A549 (cell line): ENCODE measurements at regions of chr16 and their contacts with region 1.

Region 1: GRCh38 chr16:75519881-75520280 is 16.0 kb downstream of the CHST5 start:
- DNase-seq: no peak
- ATAC-seq: no peak
- H3K4me3 ChIP-seq: no peak overlapping the region
- H3K27ac ChIP-seq: no peak overlapping the region
- H3K4me1 ChIP-seq: no peaks in the 10 kb centered on the region; the same call in 2 of the 3 replicates
- CTCF ChIP-seq: no peak
- EP300 ChIP-seq: no peak
- POLR2A ChIP-seq: no peak
- RAD21 ChIP-seq: no peak

Region 2: DNA sequence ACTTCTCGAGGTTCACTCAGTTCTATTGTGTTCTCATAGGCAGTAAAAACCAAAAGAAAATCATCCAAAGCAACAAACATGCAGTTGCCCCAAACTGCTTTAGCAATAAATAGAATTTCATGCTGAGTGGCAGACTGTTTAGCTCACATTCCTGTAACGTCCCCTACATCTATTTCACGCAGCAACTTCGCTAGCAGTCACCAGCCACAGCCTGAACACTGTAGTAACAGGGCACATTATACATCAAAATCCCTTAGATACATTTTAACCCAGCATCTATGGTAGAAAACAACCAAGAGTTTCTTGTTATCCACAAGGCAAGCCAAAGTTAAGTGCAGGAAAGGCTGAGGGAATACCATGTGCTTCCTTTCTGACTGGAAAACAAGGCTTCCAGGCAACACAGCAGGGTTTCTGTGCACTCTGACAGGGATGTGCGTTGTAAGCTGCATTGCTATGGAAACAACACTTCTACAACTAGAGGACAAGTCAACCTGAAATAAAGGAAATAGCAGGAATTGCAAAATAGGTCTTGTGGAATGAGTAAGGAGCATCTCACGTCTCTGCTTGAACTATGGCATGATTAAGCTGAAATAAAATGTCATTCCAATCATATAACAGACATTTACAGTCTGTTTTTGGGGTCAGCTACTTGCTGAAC is 142.0 kb before region 1 on chr16:
- CTCF ChIA-PET with region 1: no interaction called
- POLR2A ChIA-PET with region 1: no interaction called
- DNase-seq: peak; percentile 18 to 72
- ATAC-seq: peak; percentile 90 to 97
- H3K4me3 ChIP-seq: no peak overlapping the region
- H3K27ac ChIP-seq: peak overlapping the region; percentile 18 to 63; a peak in 4 of 6 replicates
- H3K4me1 ChIP-seq: peaks cover 13% of the 10 kb centered on the region
- CTCF ChIP-seq: no peak
- EP300 ChIP-seq: no peak
- POLR2A ChIP-seq: no peak
- RAD21 ChIP-seq: no peak

Region 3: DNA sequence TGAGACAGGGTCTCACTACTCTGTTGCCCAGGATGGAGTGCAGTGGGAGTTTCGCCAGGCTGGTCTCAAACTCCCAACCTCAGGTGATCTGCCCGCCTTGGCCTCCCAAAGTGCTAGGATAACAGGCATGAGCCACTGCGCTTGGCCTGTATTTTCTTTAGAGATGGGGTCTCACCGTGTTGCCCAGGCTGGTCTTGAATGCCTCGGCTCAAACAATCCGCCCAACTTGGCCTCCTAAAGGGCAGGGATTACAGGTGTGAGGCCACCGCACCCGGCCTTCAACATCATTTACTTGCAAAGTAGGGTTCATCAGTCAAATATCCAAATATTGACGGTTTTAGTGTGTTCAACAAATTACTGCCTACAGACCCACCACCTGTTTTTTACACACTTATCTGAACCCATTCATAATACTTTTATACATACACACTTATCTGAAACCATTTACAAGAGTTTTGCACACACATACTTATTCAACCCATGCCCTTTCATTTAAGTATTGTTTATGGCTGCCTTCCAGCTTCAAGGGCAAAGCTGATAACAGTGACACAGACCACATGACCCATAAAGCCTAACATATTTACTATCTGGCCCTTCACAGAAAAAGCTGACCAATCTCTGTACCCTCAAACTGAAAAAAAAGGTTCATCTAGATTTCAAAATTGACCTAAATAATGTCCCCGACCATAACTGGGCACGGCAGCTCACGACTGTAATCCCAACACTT is 67.3 kb before region 1 on chr16:
- CTCF ChIA-PET with region 1: interaction called, 10 read pairs
- POLR2A ChIA-PET with region 1: no interaction called
- DNase-seq: no peak
- ATAC-seq: no peak
- H3K4me3 ChIP-seq: no peak overlapping the region
- H3K27ac ChIP-seq: no peak overlapping the region
- H3K4me1 ChIP-seq: no peaks in the 10 kb centered on the region
- CTCF ChIP-seq: no peak
- EP300 ChIP-seq: no peak
- POLR2A ChIP-seq: no peak
- RAD21 ChIP-seq: no peak

Region 4: GRCh38 chr16:75486676-75487313 is 33.1 kb before region 1 on chr16:
- CTCF ChIA-PET with region 1: interaction called, 23 read pairs
- POLR2A ChIA-PET with region 1: no interaction called
- DNase-seq: no peak
- ATAC-seq: no peak
- H3K4me3 ChIP-seq: no peak overlapping the region
- H3K27ac ChIP-seq: no peak overlapping the region
- H3K4me1 ChIP-seq: peaks cover 8% of the 10 kb centered on the region; the same call in 1 of the 3 replicates
- CTCF ChIP-seq: no peak
- EP300 ChIP-seq: no peak
- POLR2A ChIP-seq: no peak
- RAD21 ChIP-seq: no peak

Region 5: GRCh38 chr16:75534560-75535205 is 14.8 kb after region 1 on chr16:
- CTCF ChIA-PET with region 1: interaction called, 19 read pairs
- POLR2A ChIA-PET with region 1: interaction called, 5 read pairs
- DNase-seq: no peak
- ATAC-seq: no peak
- H3K4me3 ChIP-seq: no peak overlapping the region
- H3K27ac ChIP-seq: no peak overlapping the region
- H3K4me1 ChIP-seq: no peaks in the 10 kb centered on the region
- CTCF ChIP-seq: no peak
- EP300 ChIP-seq: no peak
- POLR2A ChIP-seq: no peak
- RAD21 ChIP-seq: no peak

Region 6: DNA sequence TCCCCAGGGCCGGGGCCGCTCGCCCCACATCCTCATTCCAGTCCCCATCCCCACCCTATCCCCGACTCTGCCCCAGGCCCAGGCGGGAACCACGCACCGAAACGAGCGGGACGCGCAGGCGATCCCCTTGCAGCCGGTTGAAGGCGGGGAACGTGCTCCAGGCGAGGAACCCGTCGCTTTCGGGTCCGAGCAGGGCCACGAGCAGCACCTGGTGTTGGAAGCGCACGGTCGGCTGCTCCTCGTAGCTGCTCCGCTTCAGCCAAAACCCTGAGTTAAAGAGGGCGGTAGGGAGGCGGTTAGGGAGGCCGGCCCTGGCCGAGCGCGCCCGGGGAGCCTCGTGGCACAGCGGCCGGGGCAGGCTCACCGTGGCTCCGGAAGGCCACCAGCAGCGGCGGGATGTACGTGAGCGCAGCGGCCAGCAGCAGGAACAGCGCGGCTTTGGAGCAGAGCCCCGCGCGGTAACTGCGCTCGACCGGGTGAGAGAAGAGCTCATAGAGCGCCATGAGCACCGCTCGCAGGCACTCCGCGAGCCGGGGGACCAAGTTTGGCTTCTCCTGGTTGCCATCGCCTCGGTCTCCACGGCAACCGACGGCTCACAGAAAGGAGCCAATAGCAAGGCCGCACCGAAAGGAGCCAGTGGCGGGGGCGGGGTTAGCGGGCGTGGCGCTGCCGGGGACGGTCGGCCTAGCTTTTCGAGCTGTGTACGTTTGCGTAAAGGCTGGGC is 36.0 kb after region 1 on chr16 and contains the start of gene TMEM231:
- CTCF ChIA-PET with region 1: interaction called, 51 read pairs
- POLR2A ChIA-PET with region 1: interaction called, 4 read pairs
- DNase-seq: peak; percentile 91 to 95
- ATAC-seq: peak; percentile 95
- H3K4me3 ChIP-seq: peak within 1 kb of the TSS; percentile 80
- H3K27ac ChIP-seq: peak within 1 kb of the TSS; percentile 70 to 76
- H3K4me1 ChIP-seq: peaks cover 13% of the 10 kb centered on the region; the same call in 2 of the 3 replicates
- CTCF ChIP-seq: no peak
- EP300 ChIP-seq: no peak
- POLR2A ChIP-seq: peak; percentile 49; the same call in 1 of the 2 replicates
- RAD21 ChIP-seq: no peak
- polyA plus RNA-seq, gene TMEM231: 11.4 and 17.7 TPM in 2 replicates